Activated CD8-positive, alpha-beta T cell treated with anti-CD3 and anti-CD28 coated beads, Interleukin-2, amount 10 ng/mL, durations not matched to agents 7 days and 5 days (primary cell): ENCODE measurements at regions of chr15 and their contacts with region 1.

Region 1: GRCh38 chr15:90539789-90540188 is 10.1 kb downstream of the CRTC3 start:
- DNase-seq: no peak
- ATAC-seq: peak; percentile 70
- H3K4me3 Mint-ChIP-seq: peak overlapping the region; percentile 82
- H3K27ac Mint-ChIP-seq: peak overlapping the region; percentile 95
- H3K4me1 Mint-ChIP-seq: peaks cover 59% of the 10 kb centered on the region
- H3K27me3 Mint-ChIP-seq: no peaks in the 10 kb centered on the region

Region 2: DNA sequence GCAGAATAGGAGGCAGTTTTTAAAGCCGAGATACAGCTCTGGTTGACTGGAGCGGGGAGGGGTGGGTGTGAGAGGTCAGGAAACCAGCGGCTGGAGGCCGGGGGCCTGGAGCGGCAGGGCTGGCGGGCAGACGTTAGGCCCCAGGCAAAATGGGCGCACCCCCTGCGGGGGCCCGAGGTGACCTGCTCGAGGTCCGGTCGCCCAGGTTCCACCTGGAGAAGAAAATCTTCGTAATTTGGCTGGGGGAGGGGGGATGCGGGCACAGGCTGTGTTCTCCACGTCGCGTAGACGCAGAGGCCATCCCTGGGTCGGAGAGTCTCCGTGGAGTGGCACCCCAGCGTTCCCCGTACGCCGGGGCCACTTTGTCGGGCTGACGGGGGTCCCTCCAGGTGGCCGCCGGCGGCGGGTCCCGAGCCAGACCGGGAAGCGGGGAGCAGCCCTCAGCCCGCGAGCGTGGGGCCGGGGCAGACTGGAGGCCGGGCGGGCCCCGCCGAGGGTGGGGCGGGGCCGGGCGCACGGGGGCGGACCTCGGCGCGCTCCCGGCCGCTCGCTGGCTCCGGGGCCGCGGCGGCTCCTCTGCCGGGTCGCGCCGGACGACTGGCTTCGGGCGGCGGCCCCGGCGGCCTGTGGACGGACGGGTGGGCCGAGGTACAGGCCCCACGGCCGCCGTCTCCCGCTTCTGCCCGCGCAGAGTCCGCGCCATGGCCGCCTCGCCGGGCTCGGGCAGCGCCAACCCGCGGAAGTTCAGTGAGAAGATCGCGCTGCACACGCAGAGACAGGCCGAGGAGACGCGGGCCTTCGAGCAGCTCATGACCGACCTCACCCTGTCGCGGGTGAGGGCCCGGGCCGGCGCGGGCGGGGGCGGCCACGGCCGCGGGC is 10.2 kb before region 1 on chr15 and contains the start of gene CRTC3:
- CTCF ChIA-PET with region 1: interaction called, 20 read pairs
- POLR2A ChIA-PET with region 1: interaction called, 11 read pairs
- DNase-seq: peak; percentile 62
- ATAC-seq: peak; percentile 89
- H3K4me3 Mint-ChIP-seq: peak within 1 kb of the TSS; percentile 88
- H3K27ac Mint-ChIP-seq: peak within 1 kb of the TSS; percentile 88
- H3K4me1 Mint-ChIP-seq: peaks cover 40% of the 10 kb centered on the region
- H3K27me3 Mint-ChIP-seq: no peaks in the 10 kb centered on the region
- total RNA-seq, gene CRTC3: 64.9 to 66.6 TPM

Region 3: GRCh38 chr15:90557186-90558084 is 17.6 kb after region 1 on chr15:
- CTCF ChIA-PET with region 1: interaction called, 16 read pairs
- POLR2A ChIA-PET with region 1: interaction called, 3 read pairs
- DNase-seq: no peak
- ATAC-seq: peak; percentile 28
- H3K4me3 Mint-ChIP-seq: peak overlapping the region; percentile 30
- H3K27ac Mint-ChIP-seq: peak overlapping the region; percentile 53
- H3K4me1 Mint-ChIP-seq: peaks cover 60% of the 10 kb centered on the region
- H3K27me3 Mint-ChIP-seq: no peaks in the 10 kb centered on the region

Region 4: GRCh38 chr15:90580099-90580498 is 40.3 kb after region 1 on chr15:
- CTCF ChIA-PET with region 1: no interaction called
- POLR2A ChIA-PET with region 1: no interaction called
- DNase-seq: no peak
- ATAC-seq: no peak
- H3K4me3 Mint-ChIP-seq: no peak overlapping the region
- H3K27ac Mint-ChIP-seq: no peak overlapping the region
- H3K4me1 Mint-ChIP-seq: peaks cover 71% of the 10 kb centered on the region
- H3K27me3 Mint-ChIP-seq: no peaks in the 10 kb centered on the region